Cardiac septum (tissue), 1 donor: ENCODE measurements at regions of chr5 and their contacts with region 1.

Region 1: GRCh38 chr5:103041071-103041676 is 78.8 kb downstream of the GIN1 start:
- DNase-seq: no peak

Region 2: GRCh38 chr5:102681407-102681983 is 359.7 kb before region 1 on chr5:
- intact Hi-C with region 1: loop called (anchors 2 kb)
- DNase-seq: no peak

Region 3: GRCh38 chr5:103098993-103099392 is 57.8 kb after region 1 on chr5:
- intact Hi-C with region 1: no loop called
- DNase-seq: no peak

Region 4: GRCh38 chr5:103428411-103428871 is 387.3 kb after region 1 on chr5:
- intact Hi-C with region 1: no loop called
- DNase-seq: no peak